Right cardiac atrium (tissue), 5 donors: ENCODE measurements at regions of chr4 and their contacts with region 1.

Region 1: GRCh38 chr4:17324386-17324830 is 187.5 kb downstream of the QDPR start:
- DNase-seq: peak; percentile 31 to 55 (median 38)
- ATAC-seq: peak; percentile 61 to 78
- H3K4me3 ChIP-seq: no peak overlapping the region
- H3K27ac ChIP-seq: no peak overlapping the region
- H3K4me1 ChIP-seq: peaks cover 2% of the 10 kb centered on the region
- H3K27me3 ChIP-seq: no peaks in the 10 kb centered on the region

Region 2: GRCh38 chr4:16794816-16795445 is 529.5 kb before region 1 on chr4:
- intact Hi-C with region 1: loop called in 2 of 4 experiments (anchors 10 kb)
- DNase-seq: peak in 2 of 3 donors; percentile 58 to 76
- ATAC-seq: peak; percentile 49 to 67
- H3K4me3 ChIP-seq: no peak overlapping the region
- H3K27ac ChIP-seq: peak overlapping the region; percentile 32
- H3K4me1 ChIP-seq: no peaks in the 10 kb centered on the region
- H3K27me3 ChIP-seq: no peaks in the 10 kb centered on the region

Region 3: GRCh38 chr4:16916719-16917337 is 407.6 kb before region 1 on chr4:
- intact Hi-C with region 1: loop called (anchors 5 to 10 kb)
- DNase-seq: peak; percentile 33 to 72 (median 66)
- ATAC-seq: peak in 1 of 2 donors; percentile 32
- H3K4me3 ChIP-seq: no peak overlapping the region
- H3K27ac ChIP-seq: no peak overlapping the region
- H3K4me1 ChIP-seq: no peaks in the 10 kb centered on the region
- H3K27me3 ChIP-seq: no peaks in the 10 kb centered on the region